ENCODE measurements at regions of chr6 and their contacts with region 1.

Region 1: GRCh38 chr6:111997078-111997852 is 56.6 kb upstream of the CCN6 start:
- DNase-seq: peak; percentile 82
- H3K4me3 Mint-ChIP-seq: no peak overlapping the region
- H3K27ac Mint-ChIP-seq: no peak overlapping the region
- H3K4me1 Mint-ChIP-seq: peaks cover 13% of the 10 kb centered on the region
- H3K27me3 Mint-ChIP-seq: no peaks in the 10 kb centered on the region
- CTCF ChIP-seq: peak; percentile 67

Region 2: GRCh38 chr6:111709615-111710398 is 287.5 kb before region 1 on chr6:
- CTCF ChIA-PET with region 1: no interaction called
- intact Hi-C with region 1: loop called (anchors 1 kb)
- DNase-seq: peak; percentile 59
- H3K4me3 Mint-ChIP-seq: no peak overlapping the region
- H3K27ac Mint-ChIP-seq: no peak overlapping the region
- H3K4me1 Mint-ChIP-seq: peaks cover 15% of the 10 kb centered on the region
- H3K27me3 Mint-ChIP-seq: no peaks in the 10 kb centered on the region
- CTCF ChIP-seq: peak; percentile 75

Region 3: GRCh38 chr6:111799576-111800258 is 197.5 kb before region 1 on chr6:
- CTCF ChIA-PET with region 1: no interaction called
- intact Hi-C with region 1: loop called (anchors 5 kb)
- DNase-seq: no peak
- H3K4me3 Mint-ChIP-seq: no peak overlapping the region
- H3K27ac Mint-ChIP-seq: no peak overlapping the region
- H3K4me1 Mint-ChIP-seq: peaks cover under 1% of the 10 kb centered on the region
- H3K27me3 Mint-ChIP-seq: no peaks in the 10 kb centered on the region
- CTCF ChIP-seq: no peak

Measured in Calu3 (cell line).